Ovary (tissue), 10 donors: ENCODE measurements at regions of chr11 and their contacts with region 1.

Region 1: DNA sequence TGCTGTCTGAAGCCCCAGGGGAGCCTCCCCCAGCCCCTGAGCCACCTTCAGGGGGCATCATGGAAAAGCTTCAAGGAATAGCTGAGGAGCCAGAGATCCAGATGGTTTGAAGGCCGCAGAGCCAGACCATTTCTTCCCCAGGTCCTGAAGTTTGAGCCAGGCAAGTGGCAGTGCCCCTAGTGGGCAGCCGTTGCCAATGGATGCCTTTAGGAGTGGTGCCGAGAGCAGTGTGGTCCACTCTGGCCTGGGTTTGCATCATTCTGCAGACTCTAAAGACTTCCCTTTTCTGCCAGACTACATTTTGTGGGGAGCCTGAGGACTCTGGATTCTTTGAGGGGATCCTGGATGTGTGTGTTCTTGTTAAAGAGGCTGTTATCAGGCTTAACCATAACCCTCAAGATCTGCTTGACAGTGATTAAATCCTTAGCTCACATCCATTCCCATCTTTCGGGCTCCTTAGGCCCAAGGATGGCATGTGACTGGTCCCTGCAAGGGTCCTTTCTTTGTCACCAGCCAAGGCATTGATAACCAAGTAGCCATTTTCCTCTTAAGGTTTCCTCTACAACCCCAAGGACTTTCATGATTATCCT is 13.1 kb downstream of the HINFP start:
- DNase-seq: peak in 1 of 5 donors; percentile 30
- H3K4me3 ChIP-seq: no peak overlapping the region
- H3K27ac ChIP-seq: no peak overlapping the region
- H3K4me1 ChIP-seq: no peaks in the 10 kb centered on the region
- H3K27me3 ChIP-seq: no peaks in the 10 kb centered on the region
- CTCF ChIP-seq: no peak
- EP300 ChIP-seq: no peak
- POLR2A ChIP-seq: no peak

Region 2: GRCh38 chr11:119077839-119078238 is 56.6 kb before region 1 on chr11:
- intact Hi-C with region 1: no loop called
- DNase-seq: no peak
- H3K4me3 ChIP-seq: no peak overlapping the region
- H3K27ac ChIP-seq: no peak overlapping the region
- H3K4me1 ChIP-seq: no peaks in the 10 kb centered on the region
- H3K27me3 ChIP-seq: no peaks in the 10 kb centered on the region
- CTCF ChIP-seq: no peak
- EP300 ChIP-seq: no peak
- POLR2A ChIP-seq: no peak

Region 3: GRCh38 chr11:119181677-119182412 is 47.4 kb after region 1 on chr11:
- intact Hi-C with region 1: loop called in 1 of 4 experiments (anchors 10 kb)
- DNase-seq: no peak
- H3K4me3 ChIP-seq: no peak overlapping the region
- H3K27ac ChIP-seq: no peak overlapping the region
- H3K4me1 ChIP-seq: no peaks in the 10 kb centered on the region
- H3K27me3 ChIP-seq: no peaks in the 10 kb centered on the region
- CTCF ChIP-seq: no peak
- EP300 ChIP-seq: no peak
- POLR2A ChIP-seq: no peak